IMR-90 (cell line): ENCODE measurements at regions of chr17 and their contacts with region 1.

Region 1: GRCh38 chr17:14308965-14309879 is 8.3 kb downstream of the HS3ST3B1 start:
- DNase-seq: peak; percentile 89
- ATAC-seq: peak; percentile 98
- H3K4me3 ChIP-seq: peak overlapping the region; percentile 40
- H3K27ac ChIP-seq: peak overlapping the region; percentile 51
- H3K4me1 ChIP-seq: peaks cover 12% of the 10 kb centered on the region
- H3K27me3 ChIP-seq: no peaks in the 10 kb centered on the region
- CTCF ChIP-seq: no peak
- POLR2A ChIP-seq: no peak
- RAD21 ChIP-seq: no peak

Region 2: DNA sequence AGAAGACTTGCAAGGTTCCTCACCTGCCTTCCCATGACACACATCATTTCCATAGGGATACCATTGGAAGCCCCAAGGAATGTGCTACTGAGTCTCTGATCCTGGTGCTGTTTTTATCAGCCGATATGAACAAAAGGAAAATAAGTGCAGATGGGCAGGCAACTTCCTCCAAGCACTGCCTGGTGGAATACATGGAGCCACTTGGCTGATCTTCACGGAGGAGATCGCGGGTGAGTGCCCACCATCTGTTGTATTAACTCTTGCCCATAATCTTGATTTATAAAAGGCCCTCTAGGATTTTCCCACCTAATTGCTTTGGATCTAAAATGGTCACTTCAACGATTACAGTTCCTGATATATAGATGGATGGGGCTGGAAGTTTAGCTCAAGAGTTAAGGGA is 47.8 kb before region 1 on chr17:
- CTCF ChIA-PET with region 1: no interaction called
- POLR2A ChIA-PET with region 1: no interaction called
- dilution Hi-C with region 1: no loop called
- in situ Hi-C with region 1: no loop called
- intact Hi-C with region 1: no loop called
- DNase-seq: no peak
- ATAC-seq: no peak
- H3K4me3 ChIP-seq: no peak overlapping the region
- H3K27ac ChIP-seq: no peak overlapping the region
- H3K4me1 ChIP-seq: no peaks in the 10 kb centered on the region
- H3K27me3 ChIP-seq: peaks cover 15% of the 10 kb centered on the region
- CTCF ChIP-seq: no peak
- POLR2A ChIP-seq: no peak
- RAD21 ChIP-seq: no peak

Region 3: DNA sequence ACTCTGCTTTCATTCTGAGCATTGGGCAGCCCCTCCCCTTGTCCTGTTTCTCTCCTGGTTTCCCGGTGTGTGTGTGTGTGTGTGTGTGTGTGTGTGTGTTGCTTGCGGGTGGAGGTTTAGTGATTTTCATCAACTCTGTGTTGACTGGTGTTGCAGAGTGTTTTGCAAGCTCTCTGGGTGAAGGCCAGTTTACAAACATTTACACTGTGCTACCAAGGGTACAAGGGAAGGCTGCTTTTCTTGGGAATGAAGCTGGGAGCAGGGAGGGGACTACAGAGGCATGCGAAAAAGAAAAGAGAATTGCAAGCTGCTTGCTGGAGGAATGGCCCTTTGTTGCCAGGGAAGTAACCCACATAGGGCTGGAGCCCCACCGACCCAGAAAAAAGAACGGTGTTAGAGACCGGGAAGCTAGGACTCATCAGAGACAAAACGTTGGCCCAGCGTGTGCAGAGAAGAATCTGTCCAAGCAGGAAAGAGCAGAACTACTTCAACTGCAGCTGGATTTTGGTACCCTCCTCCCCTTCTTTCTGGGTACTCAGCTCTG is 21.3 kb after region 1 on chr17:
- CTCF ChIA-PET with region 1: no interaction called
- POLR2A ChIA-PET with region 1: no interaction called
- dilution Hi-C with region 1: no loop called
- in situ Hi-C with region 1: no loop called
- intact Hi-C with region 1: no loop called
- DNase-seq: no peak
- ATAC-seq: peak; percentile 69
- H3K4me3 ChIP-seq: no peak overlapping the region
- H3K27ac ChIP-seq: no peak overlapping the region
- H3K4me1 ChIP-seq: peaks cover 4% of the 10 kb centered on the region; the same call in 1 of the 2 replicates
- H3K27me3 ChIP-seq: no peaks in the 10 kb centered on the region
- CTCF ChIP-seq: no peak
- POLR2A ChIP-seq: no peak
- RAD21 ChIP-seq: no peak

Region 4: GRCh38 chr17:14389681-14390080 is 80.5 kb after region 1 on chr17:
- CTCF ChIA-PET with region 1: no interaction called
- POLR2A ChIA-PET with region 1: no interaction called
- dilution Hi-C with region 1: no loop called
- in situ Hi-C with region 1: no loop called
- intact Hi-C with region 1: no loop called
- DNase-seq: no peak
- ATAC-seq: no peak
- H3K4me3 ChIP-seq: no peak overlapping the region
- H3K27ac ChIP-seq: no peak overlapping the region
- H3K4me1 ChIP-seq: no peaks in the 10 kb centered on the region
- H3K27me3 ChIP-seq: no peaks in the 10 kb centered on the region; the same call in 1 of the 2 replicates
- CTCF ChIP-seq: no peak
- POLR2A ChIP-seq: no peak
- RAD21 ChIP-seq: no peak

Region 5: DNA sequence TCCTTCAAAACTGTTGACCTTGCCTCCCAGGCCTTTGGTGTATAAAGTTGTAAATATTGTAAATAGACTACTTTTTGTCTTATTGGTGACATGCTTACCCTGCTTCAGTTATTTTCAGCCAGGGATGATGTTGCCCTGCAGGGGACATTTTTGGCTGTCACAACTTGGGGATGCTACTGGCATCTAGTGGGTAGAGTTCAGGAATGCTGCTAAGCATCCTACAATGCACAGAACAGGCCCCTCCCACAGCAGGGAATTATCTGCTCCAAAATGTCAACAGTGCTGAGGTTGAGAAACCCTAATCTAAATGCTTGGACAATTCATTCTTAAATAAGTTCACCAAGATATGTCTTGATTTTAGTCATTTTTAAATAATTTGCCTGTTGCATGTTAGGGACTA is 496.1 kb after region 1 on chr17:
- CTCF ChIA-PET with region 1: no interaction called
- POLR2A ChIA-PET with region 1: no interaction called
- dilution Hi-C with region 1: no loop called
- in situ Hi-C with region 1: no loop called
- intact Hi-C with region 1: loop called (anchors 5 kb)
- DNase-seq: no peak
- ATAC-seq: peak; percentile 76
- H3K4me3 ChIP-seq: no peak overlapping the region
- H3K27ac ChIP-seq: no peak overlapping the region
- H3K4me1 ChIP-seq: peaks cover 2% of the 10 kb centered on the region; the same call in 1 of the 2 replicates
- H3K27me3 ChIP-seq: no peaks in the 10 kb centered on the region
- CTCF ChIP-seq: no peak
- POLR2A ChIP-seq: no peak
- RAD21 ChIP-seq: no peak

Region 6: GRCh38 chr17:15157051-15157450 is 847.8 kb after region 1 on chr17:
- CTCF ChIA-PET with region 1: interaction called, 3 read pairs
- POLR2A ChIA-PET with region 1: no interaction called
- dilution Hi-C with region 1: no loop called
- in situ Hi-C with region 1: no loop called
- intact Hi-C with region 1: loop called (anchors 5 kb)
- DNase-seq: peak; percentile 44
- ATAC-seq: peak; percentile 46; the same call in 1 of the 2 replicates
- H3K4me3 ChIP-seq: no peak overlapping the region
- H3K27ac ChIP-seq: no peak overlapping the region
- H3K4me1 ChIP-seq: no peaks in the 10 kb centered on the region
- H3K27me3 ChIP-seq: peaks cover under 1% of the 10 kb centered on the region; the same call in 1 of the 2 replicates
- CTCF ChIP-seq: no peak
- POLR2A ChIP-seq: no peak
- RAD21 ChIP-seq: no peak